ENCODE measurements at regions of chr9 and their contacts with region 1.

Region 1: DNA sequence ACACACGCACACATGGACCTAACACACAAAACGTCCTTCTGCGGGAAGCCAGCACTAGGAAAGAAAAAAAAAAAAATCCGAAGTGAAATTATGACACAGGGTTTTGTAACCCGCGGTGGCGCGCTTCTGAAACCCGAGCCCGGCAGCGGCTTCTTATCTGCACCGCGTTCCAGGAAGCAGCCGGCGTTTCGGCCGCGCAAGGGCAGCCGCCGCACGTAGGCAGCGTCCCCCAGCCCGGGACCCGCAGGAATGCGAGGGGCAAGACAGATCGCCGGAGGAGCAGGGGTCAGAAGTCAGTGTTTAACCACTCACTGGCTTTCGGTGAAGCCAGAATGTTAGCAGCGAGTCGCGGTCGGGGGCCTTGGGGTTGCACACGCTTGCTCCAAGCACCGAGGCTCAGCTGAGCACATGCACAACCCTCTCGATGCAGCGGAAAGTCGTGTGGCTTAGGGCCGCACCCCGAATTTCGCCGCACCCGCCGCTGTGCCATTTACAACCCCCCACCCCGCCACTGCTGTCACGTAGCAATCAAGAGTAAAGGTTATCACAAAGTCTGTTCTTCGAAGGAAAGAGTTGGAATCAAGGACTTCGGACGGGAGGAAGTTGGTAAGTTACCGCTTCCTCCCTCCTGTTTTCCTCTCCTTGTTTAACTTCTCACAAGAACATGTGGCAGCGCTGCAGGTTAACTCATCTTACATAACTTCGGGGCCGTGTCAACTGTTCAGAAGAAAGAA is 167.9 kb downstream of the AUH start:
- DNase-seq: peak; percentile 92
- H3K4me3 Mint-ChIP-seq: peak overlapping the region; percentile 77
- H3K27ac Mint-ChIP-seq: peak overlapping the region; percentile 98
- H3K4me1 Mint-ChIP-seq: peaks cover 75% of the 10 kb centered on the region
- H3K27me3 Mint-ChIP-seq: no peaks in the 10 kb centered on the region

Region 2: GRCh38 chr9:91131433-91131839 is 62.4 kb before region 1 on chr9:
- CTCF ChIA-PET with region 1: interaction called, 4 read pairs
- POLR2A ChIA-PET with region 1: interaction called, 22 read pairs
- DNase-seq: peak; percentile 90
- H3K4me3 Mint-ChIP-seq: peak overlapping the region; percentile 62
- H3K27ac Mint-ChIP-seq: peak overlapping the region; percentile 99
- H3K4me1 Mint-ChIP-seq: peaks cover 61% of the 10 kb centered on the region
- H3K27me3 Mint-ChIP-seq: no peaks in the 10 kb centered on the region

Region 3: DNA sequence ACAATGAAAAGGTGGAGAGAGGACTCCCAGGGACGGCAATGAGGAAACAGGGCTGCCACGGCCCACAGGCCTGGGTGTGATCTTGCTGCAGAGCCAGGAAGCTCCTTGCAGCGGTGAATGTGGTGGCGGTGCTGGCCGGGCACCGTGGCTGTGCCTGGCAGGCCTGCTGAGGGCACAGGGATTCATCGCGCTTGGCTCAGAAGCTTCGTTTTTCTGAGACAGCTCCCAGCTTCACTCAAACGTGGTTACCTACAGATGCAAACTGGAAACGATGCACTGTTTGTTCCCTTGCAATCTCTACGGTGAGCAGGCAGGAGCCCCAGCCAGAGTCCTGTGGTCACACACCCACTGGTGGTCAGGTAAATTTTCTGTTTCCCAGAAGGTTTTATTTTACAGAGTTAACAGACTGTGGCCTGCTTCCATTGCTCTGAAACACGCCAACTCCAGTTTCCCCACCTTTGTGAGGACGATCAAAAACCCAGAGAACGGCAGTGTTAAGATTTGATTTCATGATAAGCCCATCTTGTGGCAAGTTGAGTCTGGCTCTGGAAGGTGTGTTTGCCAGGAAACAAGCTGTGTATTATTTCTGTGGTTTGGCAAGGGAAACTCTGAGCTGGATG is 16.1 kb before region 1 on chr9:
- CTCF ChIA-PET with region 1: interaction called, 11 read pairs
- POLR2A ChIA-PET with region 1: interaction called, 90 read pairs
- DNase-seq: peak; percentile 69
- H3K4me3 Mint-ChIP-seq: peak overlapping the region; percentile 40
- H3K27ac Mint-ChIP-seq: peak overlapping the region; percentile 92
- H3K4me1 Mint-ChIP-seq: peaks cover 64% of the 10 kb centered on the region
- H3K27me3 Mint-ChIP-seq: no peaks in the 10 kb centered on the region

Region 4: GRCh38 chr9:91207729-91208418 is 14.0 kb after region 1 on chr9:
- CTCF ChIA-PET with region 1: interaction called, 5 read pairs
- POLR2A ChIA-PET with region 1: interaction called, 36 read pairs
- DNase-seq: no peak
- H3K4me3 Mint-ChIP-seq: peak overlapping the region; percentile 58
- H3K27ac Mint-ChIP-seq: peak overlapping the region; percentile 86
- H3K4me1 Mint-ChIP-seq: peaks cover 57% of the 10 kb centered on the region
- H3K27me3 Mint-ChIP-seq: no peaks in the 10 kb centered on the region